Body of pancreas (tissue), 4 donors: ENCODE measurements at regions of chr6 and their contacts with region 1.

Region 1: DNA sequence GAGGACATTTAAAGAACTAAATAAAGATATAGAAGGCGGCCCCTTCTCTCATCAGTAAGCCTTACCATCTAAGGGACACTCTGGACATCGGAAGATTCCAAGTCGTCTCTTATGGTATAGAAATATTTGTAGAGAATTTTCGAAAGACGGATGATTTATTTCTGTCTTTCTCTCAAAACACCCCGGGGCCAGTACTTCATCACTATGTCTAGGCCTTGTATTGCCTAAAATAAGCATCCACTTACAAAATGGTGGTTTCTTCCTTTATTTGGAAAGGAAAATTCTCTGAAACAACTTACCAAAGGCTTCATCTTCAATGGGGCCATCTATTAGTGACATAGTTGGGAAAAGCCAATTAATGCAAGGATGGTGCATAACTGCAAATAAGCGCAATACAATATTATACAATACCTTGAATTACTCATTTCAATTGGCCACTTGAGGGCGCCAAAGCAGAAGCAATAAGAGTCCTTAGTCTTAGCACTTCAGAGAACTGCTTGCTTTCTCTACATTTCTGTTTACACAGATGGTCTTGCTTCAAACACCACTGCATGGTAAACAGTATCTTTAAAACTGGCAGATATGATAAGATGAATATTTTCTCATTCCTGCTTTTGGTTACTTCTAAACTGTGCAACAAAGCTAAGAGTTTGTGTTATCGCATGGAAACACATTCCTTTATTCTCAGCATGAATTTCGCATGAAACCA is 113.2 kb downstream of the VIP start:
- DNase-seq: peak; percentile 66 to 77 (median 72)
- ATAC-seq: peak; percentile 68
- H3K4me3 ChIP-seq: no peak overlapping the region
- H3K27ac ChIP-seq: no peak overlapping the region
- H3K4me1 ChIP-seq: no peaks in the 10 kb centered on the region
- H3K27me3 ChIP-seq: no peaks in the 10 kb centered on the region
- CTCF ChIP-seq: peak; percentile 30 to 74 (median 66)
- POLR2A ChIP-seq: no peak

Region 2: GRCh38 chr6:152828431-152828830 is 35.3 kb before region 1 on chr6:
- intact Hi-C with region 1: no loop called
- DNase-seq: no peak
- ATAC-seq: no peak
- H3K4me3 ChIP-seq: no peak overlapping the region
- H3K27ac ChIP-seq: no peak overlapping the region
- H3K4me1 ChIP-seq: no peaks in the 10 kb centered on the region
- H3K27me3 ChIP-seq: no peaks in the 10 kb centered on the region
- CTCF ChIP-seq: no peak
- POLR2A ChIP-seq: no peak

Region 3: DNA sequence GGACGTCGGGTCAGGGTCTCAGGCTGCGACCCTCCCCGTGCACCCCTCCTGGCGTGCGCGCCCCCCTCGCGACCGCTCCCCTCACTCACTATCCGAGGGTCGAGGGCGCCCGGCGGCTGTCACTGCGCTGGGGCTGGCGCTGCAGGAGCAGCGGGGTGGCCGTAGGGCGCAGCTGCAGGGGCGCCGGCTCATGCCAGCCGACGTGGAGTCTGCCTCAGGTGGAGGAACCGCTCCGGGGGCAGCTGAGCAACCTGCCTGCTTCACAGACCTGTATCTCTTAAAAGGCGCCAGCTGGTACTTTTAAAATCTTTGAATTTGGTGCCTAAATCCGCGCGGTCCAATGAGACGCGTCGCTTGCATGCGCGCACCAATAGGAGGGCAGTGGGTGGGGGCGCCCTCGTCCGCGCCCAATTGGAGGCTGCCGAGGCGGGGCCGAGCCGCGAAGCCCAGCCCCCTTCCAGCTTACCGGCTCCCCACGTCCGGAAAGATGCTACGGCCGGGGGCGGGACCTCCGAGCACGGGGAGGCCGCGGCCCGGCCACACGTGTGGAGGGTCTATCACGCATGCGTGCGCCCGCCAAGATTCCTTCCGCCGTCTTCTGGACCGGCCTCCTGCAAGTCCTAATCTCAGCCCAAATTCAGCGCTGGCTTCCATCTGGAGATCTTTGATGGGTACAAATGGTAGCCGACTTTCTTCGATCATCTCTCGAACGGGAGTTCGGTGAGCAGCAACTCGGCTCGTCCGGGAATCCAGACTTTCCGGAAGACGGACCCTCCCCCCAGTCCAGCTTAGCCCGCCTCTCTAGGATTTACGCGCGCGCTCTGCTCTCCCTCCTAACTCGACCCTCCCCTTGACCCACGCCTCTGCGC is 119.2 kb after region 1 on chr6 and contains the start of gene FBXO5:
- intact Hi-C with region 1: no loop called
- DNase-seq: peak; percentile 96 to 98 (median 98)
- ATAC-seq: peak; percentile 95
- H3K4me3 ChIP-seq: peak within 1 kb of the TSS; percentile 76 to 84
- H3K27ac ChIP-seq: peak within 1 kb of the TSS; percentile 87 to 91 (median 89)
- H3K4me1 ChIP-seq: peaks cover 19% of the 10 kb centered on the region
- H3K27me3 ChIP-seq: no peaks in the 10 kb centered on the region
- CTCF ChIP-seq: no peak
- POLR2A ChIP-seq: peak in 1 of 3 donors; percentile 58
- total RNA-seq, gene FBXO5: 2.3 TPM in 1 of 2 donors, not detected in the other

Region 4: DNA sequence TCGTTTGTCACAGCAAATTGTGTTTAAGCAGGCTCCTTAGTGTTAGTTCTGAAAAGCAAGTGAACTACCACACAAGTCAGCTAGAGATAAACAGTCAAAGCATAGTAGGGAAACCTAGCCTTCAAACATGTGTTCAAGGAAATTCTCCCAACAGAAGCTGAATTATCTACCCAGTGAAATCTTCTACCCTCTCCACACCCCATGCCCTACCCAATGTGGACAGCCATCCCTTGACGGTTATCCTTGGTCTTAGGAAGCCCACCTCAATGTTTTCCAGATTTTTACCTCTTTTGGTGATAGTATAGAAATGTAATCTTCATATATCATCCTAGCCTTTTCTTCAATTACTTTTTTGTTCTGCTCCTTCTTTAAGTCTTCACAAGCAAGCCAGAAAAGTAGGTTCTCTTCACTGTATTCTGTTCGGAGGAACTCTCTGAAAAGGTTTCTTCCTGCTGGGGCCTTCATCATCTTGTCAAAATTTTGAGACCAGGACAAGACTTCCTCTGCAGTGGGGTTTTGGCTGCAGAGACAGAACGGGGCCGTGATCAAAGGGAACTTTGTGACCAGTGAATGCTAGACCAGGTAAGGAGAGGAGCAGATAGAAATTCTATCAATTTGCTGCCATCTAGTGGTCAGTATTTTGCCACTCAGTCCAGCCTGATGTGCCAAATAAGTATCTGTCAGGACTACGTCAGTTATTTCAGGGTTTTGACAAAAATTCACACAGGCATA is 160.4 kb after region 1 on chr6:
- intact Hi-C with region 1: loop called (anchors 5 kb)
- DNase-seq: peak; percentile 38 to 61 (median 48)
- ATAC-seq: peak; percentile 91
- H3K4me3 ChIP-seq: no peak overlapping the region
- H3K27ac ChIP-seq: no peak overlapping the region
- H3K4me1 ChIP-seq: peaks cover 4% of the 10 kb centered on the region
- H3K27me3 ChIP-seq: no peaks in the 10 kb centered on the region
- CTCF ChIP-seq: peak; percentile 71 to 81 (median 75)
- POLR2A ChIP-seq: no peak